CD4-positive, alpha-beta memory T cell (primary cell): ENCODE measurements at regions of chr1 and their contacts with region 1.

Region 1: DNA sequence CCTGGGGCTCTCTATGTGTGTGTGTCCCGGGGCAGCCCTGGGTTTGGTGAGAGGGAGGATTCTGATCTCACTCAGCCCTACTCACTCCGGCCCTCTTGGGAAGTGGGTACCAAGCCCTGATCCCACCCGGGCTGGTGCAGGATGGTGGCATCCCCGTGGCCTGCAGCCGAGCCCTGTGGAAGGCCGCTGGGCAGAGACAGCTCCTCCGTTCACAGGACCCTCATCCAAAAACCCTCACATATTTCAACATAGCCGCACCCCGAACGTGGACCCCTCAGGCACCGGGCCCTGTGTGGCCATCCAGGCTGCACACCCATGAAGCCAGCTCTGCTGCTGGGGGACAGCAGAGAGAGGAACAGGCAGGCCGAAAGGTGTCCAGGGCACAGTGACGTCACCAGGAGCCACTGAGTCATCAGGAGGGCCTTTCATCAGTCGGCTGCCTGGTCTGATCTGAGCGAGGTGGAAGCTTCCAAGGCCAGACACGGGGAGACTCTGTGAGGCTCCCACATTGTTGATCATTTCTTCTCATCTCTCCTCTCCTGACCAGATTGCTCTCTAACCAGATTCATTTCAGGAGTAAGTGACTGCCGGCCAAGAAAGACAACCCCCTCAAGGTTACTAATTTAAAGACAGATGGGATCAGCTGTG is 16.2 kb upstream of the GPR157 start:
- DNase-seq: no peak
- H3K4me3 ChIP-seq: no peak overlapping the region
- H3K4me3 Mint-ChIP-seq: no peak overlapping the region
- H3K27ac ChIP-seq: no peak overlapping the region
- H3K27ac Mint-ChIP-seq: no peak overlapping the region
- H3K4me1 ChIP-seq: no peaks in the 10 kb centered on the region
- H3K4me1 Mint-ChIP-seq: peaks cover 3 to 5% (median 4%) of the 10 kb centered on the region in 4 donors
- H3K27me3 ChIP-seq: no peaks in the 10 kb centered on the region
- H3K27me3 Mint-ChIP-seq: peaks cover 1 to 6% of the 10 kb centered on the region in 2 donors

Region 2: DNA sequence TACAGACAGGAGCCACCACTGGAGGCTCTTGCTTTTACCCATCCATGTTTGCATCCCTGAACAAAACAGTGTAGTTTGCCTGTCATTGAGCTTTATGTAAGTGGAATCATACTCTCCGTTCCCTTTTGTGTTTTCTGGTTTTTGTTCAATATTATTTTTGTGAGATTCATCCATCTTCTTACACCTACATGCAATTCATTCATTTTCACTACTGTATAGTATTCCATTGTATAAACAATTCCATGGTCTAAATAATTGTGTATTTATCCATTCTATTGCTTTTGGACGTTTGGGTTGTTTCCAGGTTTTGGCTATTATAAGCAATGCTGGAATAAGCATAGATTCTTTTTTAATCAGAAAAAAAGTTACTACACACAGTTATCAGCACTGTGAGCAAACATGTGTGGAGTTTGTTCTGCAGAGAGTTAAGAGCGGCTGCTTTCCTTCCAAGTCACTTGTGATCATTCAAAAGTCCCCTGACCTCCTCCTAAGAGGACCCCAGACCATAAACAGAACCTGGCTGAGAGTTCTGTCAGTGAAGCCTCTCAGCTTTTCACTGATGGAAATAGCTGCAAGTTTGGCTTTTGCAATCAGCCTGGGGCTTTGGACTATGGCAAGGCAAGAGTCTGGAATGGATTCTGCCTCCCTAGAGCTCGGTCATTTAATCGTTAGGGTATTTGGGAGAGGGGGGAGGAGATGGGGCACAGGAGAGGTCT is 11.1 kb before region 1 on chr1:
- CTCF ChIA-PET with region 1: interaction called, 17 read pairs
- POLR2A ChIA-PET with region 1: interaction called, 3 read pairs
- intact Hi-C with region 1: loop called (anchors 1 kb)
- DNase-seq: no peak
- H3K4me3 ChIP-seq: no peak overlapping the region
- H3K4me3 Mint-ChIP-seq: peak overlapping the region in 1 of 8 donors; percentile 5
- H3K27ac ChIP-seq: no peak overlapping the region
- H3K27ac Mint-ChIP-seq: no peak overlapping the region
- H3K4me1 ChIP-seq: peaks cover 5% of the 10 kb centered on the region
- H3K4me1 Mint-ChIP-seq: peaks cover 0 to 11% (median 2%) of the 10 kb centered on the region in 4 donors
- H3K27me3 ChIP-seq: no peaks in the 10 kb centered on the region
- H3K27me3 Mint-ChIP-seq: peaks cover 0 to 2% of the 10 kb centered on the region in 2 donors

Region 3: DNA sequence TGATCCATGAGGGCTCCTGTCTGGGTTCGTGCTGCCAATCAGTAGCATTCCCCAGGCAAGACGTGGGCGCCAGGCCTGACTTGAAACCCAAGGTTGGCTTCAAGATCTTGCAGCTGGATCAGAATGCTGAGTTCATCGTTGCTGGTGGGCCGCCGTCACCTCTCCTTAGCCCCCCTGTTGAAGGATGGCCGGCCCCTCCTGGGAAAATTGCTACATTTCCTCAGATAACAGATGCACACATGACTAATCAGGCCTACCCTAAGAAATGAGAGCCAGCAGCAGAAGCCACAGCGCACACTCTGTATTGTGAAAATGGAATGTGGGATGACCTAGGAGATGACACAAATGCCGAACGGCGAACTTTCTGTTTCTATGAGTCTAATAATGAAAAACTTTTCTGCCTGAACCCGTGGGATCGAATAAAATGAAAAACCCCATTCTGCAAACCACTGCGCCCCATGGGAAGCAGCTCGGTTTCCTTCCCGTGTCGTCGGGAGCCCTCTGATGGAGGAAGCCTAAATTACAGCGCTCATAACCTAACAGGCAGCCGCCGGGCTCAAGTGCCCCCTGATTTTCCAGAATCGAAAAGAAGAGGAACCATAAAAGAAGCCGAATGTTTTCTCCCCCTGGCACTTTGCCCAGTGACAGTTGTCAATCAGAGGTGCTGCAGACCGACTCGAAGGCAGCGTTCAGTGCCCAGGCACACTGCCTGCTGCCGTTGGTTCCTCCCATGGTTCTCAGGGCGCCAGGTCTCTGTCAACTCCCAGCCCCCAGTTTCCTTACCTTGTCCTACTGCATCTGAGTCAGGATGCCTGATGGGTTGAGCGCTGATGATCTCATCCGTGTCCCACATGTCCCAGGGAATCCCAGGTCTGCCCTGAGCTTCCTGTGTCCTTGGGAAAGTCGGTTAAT is 51.2 kb after region 1 on chr1:
- CTCF ChIA-PET with region 1: interaction called, 10 read pairs
- POLR2A ChIA-PET with region 1: no interaction called
- intact Hi-C with region 1: loop called (anchors 1 kb)
- DNase-seq: peak in 4 of 5 donors; percentile 30 to 46 (median 42)
- H3K4me3 ChIP-seq: no peak overlapping the region
- H3K4me3 Mint-ChIP-seq: peak overlapping the region in 1 of 8 donors; percentile 54
- H3K27ac ChIP-seq: no peak overlapping the region
- H3K27ac Mint-ChIP-seq: no peak overlapping the region
- H3K4me1 ChIP-seq: peaks cover 4% of the 10 kb centered on the region
- H3K4me1 Mint-ChIP-seq: peaks cover 8 to 17% (median 11%) of the 10 kb centered on the region in 4 donors
- H3K27me3 ChIP-seq: peaks cover 21% of the 10 kb centered on the region
- H3K27me3 Mint-ChIP-seq: peaks cover 41 to 47% of the 10 kb centered on the region in 2 donors

Region 4: GRCh38 chr1:9455487-9456234 is 310.5 kb after region 1 on chr1:
- CTCF ChIA-PET with region 1: no interaction called
- POLR2A ChIA-PET with region 1: no interaction called
- intact Hi-C with region 1: no loop called
- DNase-seq: peak; percentile 42 to 56 (median 49)
- H3K4me3 ChIP-seq: no peak overlapping the region
- H3K4me3 Mint-ChIP-seq: no peak overlapping the region
- H3K27ac ChIP-seq: no peak overlapping the region
- H3K27ac Mint-ChIP-seq: no peak overlapping the region
- H3K4me1 ChIP-seq: no peaks in the 10 kb centered on the region
- H3K4me1 Mint-ChIP-seq: no peaks in the 10 kb centered on the region
- H3K27me3 ChIP-seq: no peaks in the 10 kb centered on the region
- H3K27me3 Mint-ChIP-seq: peaks cover 2 to 3% of the 10 kb centered on the region in 2 donors